Naive thymus-derived CD4-positive, alpha-beta T cell (primary cell): ENCODE measurements at regions of chr6 and their contacts with region 1.

Region 1: DNA sequence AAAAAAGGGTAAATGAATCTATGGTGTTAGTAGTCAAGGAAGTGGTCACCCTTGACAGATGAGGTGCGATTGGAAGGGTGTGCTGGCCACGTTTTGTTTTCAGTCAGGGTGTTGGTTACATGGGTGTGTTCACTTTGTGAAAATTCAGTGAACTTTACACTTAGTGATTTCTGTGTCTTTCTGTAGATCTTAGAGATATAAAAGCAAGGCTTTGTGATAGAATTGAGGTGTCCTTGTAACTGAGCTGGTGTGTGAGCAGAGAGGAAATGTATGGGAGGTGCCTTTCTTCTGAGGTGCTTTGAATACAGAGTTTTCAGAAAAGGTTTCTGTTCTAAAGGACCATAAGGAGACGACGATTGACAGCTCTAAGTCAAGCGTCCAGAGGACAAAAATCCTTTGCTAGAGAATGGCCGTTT is 90.5 kb downstream of the SAMD3 start:
- DNase-seq: peak in 8 of 9 donors; percentile 32 to 92 (median 84)
- ATAC-seq: peak; percentile 92
- H3K4me3 ChIP-seq: peak overlapping the region; percentile 21
- H3K4me3 Mint-ChIP-seq: peak overlapping the region; percentile 51 to 81 (median 70)
- H3K27ac ChIP-seq: peak overlapping the region; percentile 71
- H3K27ac Mint-ChIP-seq: peak overlapping the region; percentile 85 to 98 (median 93)
- H3K4me1 ChIP-seq: peaks cover 43 to 61% of the 10 kb centered on the region in 2 donors
- H3K4me1 Mint-ChIP-seq: peaks cover 59 to 100% (median 93%) of the 10 kb centered on the region in 7 donors
- H3K27me3 ChIP-seq: no peaks in the 10 kb centered on the region
- H3K27me3 Mint-ChIP-seq: no peaks in the 10 kb centered on the region

Region 2: DNA sequence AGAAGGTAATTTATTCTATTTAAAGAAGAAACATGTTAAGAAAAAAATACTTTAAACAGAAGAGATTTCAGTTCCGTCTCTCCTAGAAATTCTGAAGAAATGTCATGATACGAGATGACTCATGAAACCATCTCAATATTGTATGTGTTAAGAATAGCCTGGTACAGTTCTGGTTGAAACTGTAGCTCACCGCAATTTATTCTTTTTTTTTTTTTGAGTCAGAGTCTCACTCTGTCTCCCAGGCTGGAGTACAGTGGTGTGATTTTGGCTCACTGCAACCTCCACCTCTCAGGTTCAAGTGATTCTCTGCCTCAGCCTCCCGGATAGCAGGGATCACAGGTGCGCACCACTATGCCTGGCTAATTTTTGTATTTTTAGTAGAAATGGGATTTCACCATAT is 525.6 kb before region 1 on chr6:
- CTCF ChIA-PET with region 1: no interaction called
- POLR2A ChIA-PET with region 1: no interaction called
- intact Hi-C with region 1: no loop called
- DNase-seq: no peak
- ATAC-seq: no peak
- H3K4me3 ChIP-seq: no peak overlapping the region
- H3K4me3 Mint-ChIP-seq: no peak overlapping the region
- H3K27ac ChIP-seq: no peak overlapping the region
- H3K27ac Mint-ChIP-seq: no peak overlapping the region
- H3K4me1 ChIP-seq: no peaks in the 10 kb centered on the region
- H3K4me1 Mint-ChIP-seq: no peaks in the 10 kb centered on the region
- H3K27me3 ChIP-seq: no peaks in the 10 kb centered on the region
- H3K27me3 Mint-ChIP-seq: no peaks in the 10 kb centered on the region

Region 3: GRCh38 chr6:130027948-130028347 is 104.3 kb before region 1 on chr6:
- CTCF ChIA-PET with region 1: no interaction called
- POLR2A ChIA-PET with region 1: no interaction called
- intact Hi-C with region 1: loop called in 1 of 2 experiments (anchors 2 kb)
- DNase-seq: peak in 6 of 9 donors; percentile 33 to 71 (median 62)
- ATAC-seq: peak; percentile 83
- H3K4me3 ChIP-seq: no peak overlapping the region
- H3K4me3 Mint-ChIP-seq: peak overlapping the region in 9 of 10 donors; percentile 32 to 74 (median 64)
- H3K27ac ChIP-seq: peak overlapping the region; percentile 64
- H3K27ac Mint-ChIP-seq: peak overlapping the region; percentile 80 to 97 (median 91)
- H3K4me1 ChIP-seq: peaks cover 22 to 31% of the 10 kb centered on the region in 2 donors
- H3K4me1 Mint-ChIP-seq: peaks cover 43 to 88% (median 76%) of the 10 kb centered on the region in 7 donors
- H3K27me3 ChIP-seq: no peaks in the 10 kb centered on the region
- H3K27me3 Mint-ChIP-seq: no peaks in the 10 kb centered on the region

Region 4: GRCh38 chr6:130183271-130184222 is 51.3 kb after region 1 on chr6:
- CTCF ChIA-PET with region 1: interaction called, 3 read pairs
- POLR2A ChIA-PET with region 1: interaction called, 3 read pairs
- intact Hi-C with region 1: loop called (anchors 1 to 5 kb)
- DNase-seq: peak in 7 of 9 donors; percentile 5 to 75 (median 60)
- ATAC-seq: peak; percentile 80
- H3K4me3 ChIP-seq: peak overlapping the region; percentile 33
- H3K4me3 Mint-ChIP-seq: peak overlapping the region; percentile 39 to 81 (median 70)
- H3K27ac ChIP-seq: peak overlapping the region; percentile 75
- H3K27ac Mint-ChIP-seq: peak overlapping the region; percentile 59 to 98 (median 91)
- H3K4me1 ChIP-seq: peaks cover 23 to 32% of the 10 kb centered on the region in 2 donors
- H3K4me1 Mint-ChIP-seq: peaks cover 27 to 76% (median 65%) of the 10 kb centered on the region in 7 donors
- H3K27me3 ChIP-seq: no peaks in the 10 kb centered on the region
- H3K27me3 Mint-ChIP-seq: no peaks in the 10 kb centered on the region

Region 5: DNA sequence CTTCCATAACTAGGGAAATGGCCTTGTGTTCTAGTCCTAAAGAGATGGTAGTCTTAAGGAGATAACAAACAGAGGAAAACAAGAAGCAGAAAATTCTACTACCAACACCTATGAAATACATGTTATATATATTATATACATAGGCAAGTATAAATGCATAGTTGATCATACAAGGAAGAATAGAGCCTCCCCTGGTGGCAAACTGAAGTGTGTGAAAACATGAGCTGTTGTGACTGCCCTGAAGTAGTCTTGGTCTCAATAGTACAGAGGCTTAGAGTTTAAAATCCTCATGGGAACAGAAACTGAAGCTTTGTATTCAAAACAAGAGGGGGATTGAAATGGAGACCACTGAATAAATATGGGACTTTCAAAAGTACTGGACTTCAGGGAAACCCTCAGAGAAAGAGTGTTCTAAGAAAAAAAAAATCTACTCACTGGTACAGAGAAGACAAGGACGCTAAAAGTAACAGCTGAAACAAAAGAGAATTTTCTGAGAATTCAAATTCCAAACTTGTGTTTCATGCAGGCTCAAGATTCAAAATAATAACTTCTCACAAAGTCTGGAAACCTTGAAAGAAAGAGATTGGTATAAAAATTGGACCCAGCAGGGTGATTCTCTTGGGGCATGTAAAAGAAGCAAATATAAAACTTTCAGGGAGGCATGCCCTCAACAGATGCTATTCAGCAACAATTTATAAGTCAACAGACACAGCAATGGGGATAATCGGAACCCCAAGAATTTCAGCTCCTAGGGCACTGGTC is 150.1 kb after region 1 on chr6:
- CTCF ChIA-PET with region 1: interaction called, 13 read pairs
- POLR2A ChIA-PET with region 1: interaction called, 3 read pairs
- intact Hi-C with region 1: loop called (anchors 1 kb)
- DNase-seq: peak in 7 of 9 donors; percentile 8 to 54 (median 43)
- ATAC-seq: peak; percentile 84
- H3K4me3 ChIP-seq: no peak overlapping the region
- H3K4me3 Mint-ChIP-seq: no peak overlapping the region
- H3K27ac ChIP-seq: no peak overlapping the region
- H3K27ac Mint-ChIP-seq: peak overlapping the region in 6 of 9 donors; percentile 12 to 66 (median 49)
- H3K4me1 ChIP-seq: no peaks in the 10 kb centered on the region
- H3K4me1 Mint-ChIP-seq: peaks cover 7 to 18% (median 14%) of the 10 kb centered on the region in 7 donors
- H3K27me3 ChIP-seq: no peaks in the 10 kb centered on the region
- H3K27me3 Mint-ChIP-seq: peaks cover 0 to 4% (median 0%) of the 10 kb centered on the region in 5 donors

Region 6: DNA sequence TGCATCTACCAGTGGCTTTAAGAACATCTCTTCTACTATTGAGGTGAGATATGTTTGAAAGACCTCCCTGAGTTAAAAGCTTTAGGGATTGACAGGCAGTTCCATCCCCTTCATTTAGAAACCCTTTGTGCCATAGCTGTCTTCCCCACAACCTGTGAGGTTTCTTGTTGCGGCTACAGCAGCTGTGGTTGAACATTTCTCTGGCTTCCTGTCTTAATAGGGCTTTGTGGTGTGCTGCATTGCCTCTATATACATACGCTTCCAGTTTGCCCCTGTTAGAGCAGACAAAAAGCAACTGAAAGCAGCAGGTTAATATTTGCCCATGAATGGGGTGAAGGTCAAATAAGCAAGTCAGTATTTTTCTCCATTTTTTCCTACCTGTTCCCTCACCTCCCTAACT is 443.7 kb after region 1 on chr6:
- CTCF ChIA-PET with region 1: no interaction called
- POLR2A ChIA-PET with region 1: no interaction called
- intact Hi-C with region 1: loop called in 1 of 2 experiments (anchors 5 kb)
- DNase-seq: peak; percentile 5 to 82 (median 72)
- ATAC-seq: peak; percentile 94
- H3K4me3 ChIP-seq: peak overlapping the region; percentile 31
- H3K4me3 Mint-ChIP-seq: peak overlapping the region; percentile 35 to 82 (median 73)
- H3K27ac ChIP-seq: peak overlapping the region; percentile 8
- H3K27ac Mint-ChIP-seq: peak overlapping the region; percentile 29 to 91 (median 67)
- H3K4me1 ChIP-seq: peaks cover 25 to 39% of the 10 kb centered on the region in 2 donors
- H3K4me1 Mint-ChIP-seq: peaks cover 32 to 62% (median 48%) of the 10 kb centered on the region in 7 donors
- H3K27me3 ChIP-seq: no peaks in the 10 kb centered on the region
- H3K27me3 Mint-ChIP-seq: peaks cover 0 to 4% (median 0%) of the 10 kb centered on the region in 5 donors

Region 7: GRCh38 chr6:131199568-131200272 is 1067.4 kb after region 1 on chr6:
- CTCF ChIA-PET with region 1: no interaction called
- POLR2A ChIA-PET with region 1: no interaction called
- intact Hi-C with region 1: loop called in 1 of 2 experiments (anchors 5 kb)
- DNase-seq: peak; percentile 37 to 92 (median 88)
- ATAC-seq: peak; percentile 99
- H3K4me3 ChIP-seq: peak overlapping the region; percentile 44
- H3K4me3 Mint-ChIP-seq: peak overlapping the region; percentile 69 to 87 (median 82)
- H3K27ac ChIP-seq: peak overlapping the region; percentile 79
- H3K27ac Mint-ChIP-seq: peak overlapping the region; percentile 91 to 99 (median 97)
- H3K4me1 ChIP-seq: peaks cover 45 to 57% of the 10 kb centered on the region in 2 donors
- H3K4me1 Mint-ChIP-seq: peaks cover 37 to 71% (median 61%) of the 10 kb centered on the region in 7 donors
- H3K27me3 ChIP-seq: no peaks in the 10 kb centered on the region
- H3K27me3 Mint-ChIP-seq: no peaks in the 10 kb centered on the region